ENCODE measurements at regions of chrX and their contacts with region 1.

Region 1: GRCh38 chrX:56563231-56564161 is at the start of gene UBQLN2:
- DNase-seq: peak; percentile 69 to 96 (median 74)

Region 2: GRCh38 chrX:56113785-56114436 is 449.6 kb before region 1 on chrX:
- intact Hi-C with region 1: no loop called
- DNase-seq: peak in 2 of 10 donors; percentile 56

Region 3: GRCh38 chrX:56462389-56462788 is 101.1 kb before region 1 on chrX:
- intact Hi-C with region 1: loop called (anchors 10 kb)
- DNase-seq: no peak

Region 4: DNA sequence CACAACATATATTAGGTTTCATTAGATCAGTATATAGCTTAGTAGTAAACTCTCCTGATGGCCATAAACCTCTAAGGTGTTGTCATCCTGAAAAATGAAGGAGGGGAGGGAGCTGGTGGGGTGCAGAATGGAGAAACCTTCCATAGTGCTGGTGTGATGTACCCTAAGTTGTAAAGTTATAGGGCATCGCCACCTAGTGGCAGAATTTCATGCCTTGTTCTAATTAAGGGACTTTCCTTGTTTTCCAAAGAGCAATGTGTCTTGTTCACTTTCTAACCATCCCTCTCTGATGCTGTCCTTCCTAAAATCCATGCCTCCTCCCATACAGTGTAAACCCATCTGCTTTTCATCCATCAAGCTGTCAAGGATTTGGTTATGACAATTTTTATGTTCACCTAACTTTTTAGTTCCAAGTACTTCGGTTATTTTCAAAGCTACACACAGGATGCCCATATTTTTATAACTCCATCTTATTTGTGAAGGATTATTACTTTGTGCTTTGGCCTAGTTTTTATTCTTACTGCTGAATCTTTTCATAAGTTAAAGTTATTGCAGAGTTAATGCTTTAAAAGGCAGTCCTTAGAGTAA is 170.1 kb after region 1 on chrX:
- intact Hi-C with region 1: loop called (anchors 10 kb)
- DNase-seq: peak in 5 of 10 donors; percentile 24 to 46 (median 34)